ENCODE measurements at regions of chr16 and their contacts with region 1.

Region 1: DNA sequence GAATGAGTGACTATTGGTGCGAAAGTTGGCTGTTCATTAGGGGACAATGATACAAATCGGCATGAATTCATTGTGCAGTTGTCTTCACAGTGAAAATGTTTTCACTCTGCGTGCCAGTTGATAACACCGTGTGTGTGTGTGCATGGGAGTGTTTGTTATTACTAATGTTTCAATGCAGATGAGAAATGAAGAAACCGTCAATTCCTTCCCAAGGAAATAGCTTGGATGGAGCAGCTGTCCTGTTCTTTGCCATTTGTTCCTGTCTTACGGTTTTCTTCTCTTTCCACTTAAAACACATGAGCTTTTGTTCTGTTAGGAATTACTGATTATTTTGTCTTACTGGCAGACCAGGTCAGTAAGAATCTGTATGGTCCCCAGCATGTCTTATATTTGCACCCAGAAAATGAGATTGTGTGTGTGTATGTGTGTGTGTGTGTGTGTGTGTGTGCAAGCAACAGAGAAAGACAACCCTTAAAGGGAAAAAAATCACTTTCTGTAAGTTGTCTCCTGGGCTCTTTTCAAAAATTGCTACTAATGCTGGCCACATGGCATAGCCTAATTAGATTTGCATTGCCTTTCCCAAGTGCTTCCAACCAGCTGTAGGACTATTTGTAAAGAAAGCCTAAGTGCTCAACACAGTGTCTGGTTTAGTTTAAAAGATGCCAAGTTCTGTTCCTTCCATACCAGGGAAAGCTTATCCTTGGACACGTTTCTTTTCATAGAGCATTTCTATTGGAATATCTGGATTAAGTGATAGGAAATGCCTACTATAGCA is 23.8 kb downstream of the SHISA9 start:
- DNase-seq: no peak
- H3K4me3 ChIP-seq: no peak overlapping the region
- H3K27ac ChIP-seq: peak overlapping the region; percentile 23
- H3K4me1 ChIP-seq: peaks cover 20% of the 10 kb centered on the region
- H3K27me3 ChIP-seq: no peaks in the 10 kb centered on the region
- CTCF ChIP-seq: no peak

Region 2: DNA sequence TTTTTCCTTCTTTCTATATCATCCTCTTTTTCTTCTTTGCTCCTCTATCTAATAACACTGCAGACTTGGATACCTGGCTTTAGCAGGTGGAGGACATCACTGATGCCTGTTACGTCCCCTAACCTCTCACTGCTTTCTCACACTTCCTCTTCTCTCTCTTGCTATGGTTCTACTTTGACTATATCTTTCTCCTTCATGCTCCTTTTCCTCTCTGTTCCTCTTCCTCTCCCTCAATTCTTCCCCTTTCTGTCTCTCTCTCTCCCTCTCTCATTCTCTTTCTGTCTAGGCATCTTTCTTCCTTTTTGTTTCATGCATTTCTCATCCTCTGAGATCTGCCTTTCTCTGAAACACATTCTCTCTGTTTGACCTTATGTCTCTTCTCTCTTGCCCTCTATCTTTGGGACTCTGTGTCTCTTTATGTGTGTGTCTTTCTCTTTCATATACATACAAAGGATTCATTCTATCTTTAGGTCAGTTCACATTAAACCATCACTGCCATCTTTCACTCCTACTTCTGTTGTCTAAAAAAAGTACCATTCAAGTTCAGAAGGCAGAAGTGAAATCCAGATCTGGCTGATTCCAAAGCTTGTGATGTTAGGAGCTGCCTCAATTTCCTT is 329.9 kb after region 1 on chr16:
- CTCF ChIA-PET with region 1: no interaction called
- POLR2A ChIA-PET with region 1: interaction called, 20 read pairs
- intact Hi-C with region 1: no loop called
- DNase-seq: no peak
- H3K4me3 ChIP-seq: no peak overlapping the region
- H3K27ac ChIP-seq: no peak overlapping the region
- H3K4me1 ChIP-seq: no peaks in the 10 kb centered on the region
- H3K27me3 ChIP-seq: no peaks in the 10 kb centered on the region
- CTCF ChIP-seq: no peak